ENCODE measurements at regions of chr4 and their contacts with region 1.

Region 1: DNA sequence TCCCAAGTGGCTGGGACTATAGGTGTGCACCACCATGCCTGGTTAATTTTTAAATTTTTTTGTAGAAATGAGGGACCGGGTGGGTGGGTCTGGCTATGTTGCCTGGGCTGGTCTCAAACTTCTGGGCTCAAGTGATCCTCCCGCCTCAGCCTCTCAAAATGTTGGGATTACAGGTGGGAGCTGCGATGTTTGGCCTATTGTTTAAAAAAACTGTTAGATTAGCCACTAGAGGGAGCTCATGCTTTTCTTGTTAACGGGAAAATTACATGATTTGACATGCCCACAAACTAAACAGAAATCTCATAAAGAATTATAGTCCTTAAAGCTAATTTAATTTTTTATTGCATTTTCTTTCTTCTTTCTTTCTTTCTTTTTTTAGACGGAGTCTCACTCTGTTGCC is 5.0 kb upstream of the SDAD1 start:
- DNase-seq: peak; percentile 72
- ATAC-seq: no peak
- H3K4me3 ChIP-seq: no peak overlapping the region
- H3K4me3 Mint-ChIP-seq: no peak overlapping the region
- H3K27ac ChIP-seq: no peak overlapping the region
- H3K27ac Mint-ChIP-seq: no peak overlapping the region
- H3K4me1 ChIP-seq: peaks cover 4 to 6% of the 10 kb centered on the region in 2 donors
- H3K4me1 Mint-ChIP-seq: peaks cover 7% of the 10 kb centered on the region
- H3K27me3 ChIP-seq: no peaks in the 10 kb centered on the region
- H3K27me3 Mint-ChIP-seq: peaks cover 9% of the 10 kb centered on the region
- CTCF ChIP-seq: peak; percentile 81

Region 2: GRCh38 chr4:75422998-75423397 is 572.7 kb before region 1 on chr4:
- CTCF ChIA-PET with region 1: no interaction called
- POLR2A ChIA-PET with region 1: no interaction called
- intact Hi-C with region 1: no loop called
- DNase-seq: no peak
- ATAC-seq: no peak
- H3K4me3 ChIP-seq: no peak overlapping the region
- H3K4me3 Mint-ChIP-seq: no peak overlapping the region
- H3K27ac ChIP-seq: no peak overlapping the region
- H3K27ac Mint-ChIP-seq: no peak overlapping the region
- H3K4me1 ChIP-seq: no peaks in the 10 kb centered on the region
- H3K4me1 Mint-ChIP-seq: no peaks in the 10 kb centered on the region
- H3K27me3 ChIP-seq: peaks cover 0 to 3% (median 0%) of the 10 kb centered on the region in 4 experiments
- H3K27me3 Mint-ChIP-seq: peaks cover 34% of the 10 kb centered on the region
- CTCF ChIP-seq: no peak

Region 3: GRCh38 chr4:76007094-76007862 is 11.6 kb after region 1 on chr4 and contains the start of gene CXCL9:
- CTCF ChIA-PET with region 1: interaction called, 18 read pairs
- POLR2A ChIA-PET with region 1: no interaction called
- intact Hi-C with region 1: no loop called
- DNase-seq: no peak
- ATAC-seq: no peak
- H3K4me3 ChIP-seq: no peak within 1 kb of the TSS
- H3K4me3 Mint-ChIP-seq: no peak within 1 kb of the TSS
- H3K27ac ChIP-seq: no peak within 1 kb of the TSS
- H3K27ac Mint-ChIP-seq: no peak within 1 kb of the TSS
- H3K4me1 ChIP-seq: peaks cover 7 to 9% of the 10 kb centered on the region in 2 donors
- H3K4me1 Mint-ChIP-seq: peaks cover 4% of the 10 kb centered on the region
- H3K27me3 ChIP-seq: no peaks in the 10 kb centered on the region
- H3K27me3 Mint-ChIP-seq: no peaks in the 10 kb centered on the region
- CTCF ChIP-seq: no peak
- total RNA-seq, gene CXCL9: not detected in 2 replicates

Region 4: GRCh38 chr4:76055016-76055415 is 59.3 kb after region 1 on chr4:
- CTCF ChIA-PET with region 1: interaction called, 31 read pairs
- POLR2A ChIA-PET with region 1: no interaction called
- intact Hi-C with region 1: no loop called
- DNase-seq: peak; percentile 63
- ATAC-seq: peak; percentile 95
- H3K4me3 ChIP-seq: no peak overlapping the region
- H3K4me3 Mint-ChIP-seq: peak overlapping the region; percentile 55
- H3K27ac ChIP-seq: peak overlapping the region; percentile 39 to 69
- H3K27ac Mint-ChIP-seq: peak overlapping the region; percentile 86
- H3K4me1 ChIP-seq: peaks cover 17 to 20% of the 10 kb centered on the region in 2 donors
- H3K4me1 Mint-ChIP-seq: peaks cover 19% of the 10 kb centered on the region
- H3K27me3 ChIP-seq: no peaks in the 10 kb centered on the region
- H3K27me3 Mint-ChIP-seq: no peaks in the 10 kb centered on the region
- CTCF ChIP-seq: no peak

Region 5: GRCh38 chr4:76067652-76068286 is 72.0 kb after region 1 on chr4:
- CTCF ChIA-PET with region 1: interaction called, 132 read pairs
- POLR2A ChIA-PET with region 1: interaction called, 4 read pairs
- intact Hi-C with region 1: loop called (anchors 1 kb)
- DNase-seq: peak; percentile 83
- ATAC-seq: peak; percentile 82
- H3K4me3 ChIP-seq: no peak overlapping the region
- H3K4me3 Mint-ChIP-seq: no peak overlapping the region
- H3K27ac ChIP-seq: no peak overlapping the region
- H3K27ac Mint-ChIP-seq: no peak overlapping the region
- H3K4me1 ChIP-seq: peaks cover under 1% of the 10 kb centered on the region in 2 donors
- H3K4me1 Mint-ChIP-seq: peaks cover 2% of the 10 kb centered on the region
- H3K27me3 ChIP-seq: no peaks in the 10 kb centered on the region
- H3K27me3 Mint-ChIP-seq: no peaks in the 10 kb centered on the region
- CTCF ChIP-seq: peak; percentile 94

Region 6: DNA sequence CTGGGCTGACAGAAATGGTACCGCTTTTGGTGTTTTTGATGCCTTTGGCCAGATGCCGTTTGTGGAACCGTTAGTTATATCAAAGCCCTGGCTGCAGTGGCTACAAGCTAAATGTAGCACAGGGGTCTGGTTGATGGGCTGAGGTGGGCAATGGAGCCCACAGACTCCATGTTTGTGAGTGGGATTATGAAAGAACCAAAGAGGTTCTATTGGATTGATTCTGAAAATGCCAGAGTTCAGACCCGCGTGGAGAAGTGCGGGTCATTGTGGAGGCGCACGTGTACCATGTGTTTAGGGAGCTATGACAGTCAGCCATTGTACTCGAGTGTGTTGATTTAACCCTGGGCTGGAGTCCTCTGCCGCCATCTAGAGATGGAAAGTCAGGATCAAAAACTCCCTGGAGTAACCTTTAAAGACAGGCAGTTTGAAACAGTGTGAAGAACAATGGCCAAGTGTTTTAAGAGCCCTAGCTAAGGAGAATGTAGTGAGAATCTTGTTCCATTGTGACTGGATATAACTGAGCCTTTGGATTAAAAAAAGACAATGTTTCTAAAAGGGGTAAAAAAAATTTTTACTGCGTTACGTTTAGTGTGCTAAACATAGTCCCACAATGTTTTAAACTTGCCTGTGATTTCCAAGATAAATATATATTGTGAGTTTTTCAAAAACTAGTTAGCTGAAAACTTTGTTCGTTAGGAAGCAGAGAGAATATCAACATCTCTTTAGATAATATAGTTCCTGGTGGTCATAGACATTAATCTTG is 91.5 kb after region 1 on chr4:
- CTCF ChIA-PET with region 1: interaction called, 16 read pairs
- POLR2A ChIA-PET with region 1: no interaction called
- intact Hi-C with region 1: no loop called
- DNase-seq: peak; percentile 10
- ATAC-seq: no peak
- H3K4me3 ChIP-seq: no peak overlapping the region
- H3K4me3 Mint-ChIP-seq: no peak overlapping the region
- H3K27ac ChIP-seq: no peak overlapping the region
- H3K27ac Mint-ChIP-seq: no peak overlapping the region
- H3K4me1 ChIP-seq: peaks cover 4 to 7% of the 10 kb centered on the region in 2 donors
- H3K4me1 Mint-ChIP-seq: peaks cover 7% of the 10 kb centered on the region
- H3K27me3 ChIP-seq: peaks cover 0 to 2% (median 0%) of the 10 kb centered on the region in 4 experiments
- H3K27me3 Mint-ChIP-seq: peaks cover 4% of the 10 kb centered on the region
- CTCF ChIP-seq: no peak

Measured in B cell (primary cell).